ENCODE measurements at regions of chr2 and their contacts with region 1.

Region 1: GRCh38 chr2:238370823-238371372 is 50.6 kb downstream of the TRAF3IP1 start:
- DNase-seq: peak; percentile 71
- ATAC-seq: peak; percentile 99
- H3K4me3 ChIP-seq: no peak overlapping the region
- H3K27ac ChIP-seq: no peak overlapping the region
- H3K4me1 ChIP-seq: no peaks in the 10 kb centered on the region
- H3K27me3 ChIP-seq: no peaks in the 10 kb centered on the region
- CTCF ChIP-seq: peak; percentile 93

Region 2: DNA sequence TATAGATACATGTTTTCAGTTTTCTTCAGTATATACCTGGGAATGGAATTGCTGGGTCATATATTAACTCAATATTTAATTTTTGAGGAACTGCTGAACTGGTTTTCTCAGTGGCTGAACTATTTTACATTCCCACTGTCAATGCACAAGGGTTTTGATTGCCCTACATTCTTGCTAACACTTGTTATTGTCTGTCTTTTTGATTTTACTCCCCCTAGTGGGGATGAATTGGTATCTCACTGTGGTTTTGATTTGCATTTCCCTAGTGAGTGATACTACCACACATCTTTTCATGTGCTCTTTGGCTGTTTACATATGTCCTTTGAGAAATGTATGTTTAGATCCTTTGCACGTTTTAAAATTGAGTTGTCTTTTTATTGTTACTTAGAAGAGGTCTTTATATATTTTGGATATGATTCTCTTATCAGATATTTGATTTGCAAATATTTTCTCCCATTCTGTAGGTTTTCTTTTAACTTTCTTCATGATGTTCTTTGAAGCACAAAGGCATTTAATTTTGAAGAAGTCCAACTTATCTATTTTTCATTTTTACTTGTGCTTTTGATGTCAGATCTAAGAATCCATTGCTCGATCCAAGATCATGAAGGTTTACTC is 92.0 kb after region 1 on chr2:
- CTCF ChIA-PET with region 1: no interaction called
- POLR2A ChIA-PET with region 1: no interaction called
- intact Hi-C with region 1: loop called (anchors 2 kb)
- DNase-seq: peak; percentile 73
- ATAC-seq: peak; percentile 72
- H3K4me3 ChIP-seq: no peak overlapping the region
- H3K27ac ChIP-seq: no peak overlapping the region
- H3K4me1 ChIP-seq: peaks cover 19% of the 10 kb centered on the region
- H3K27me3 ChIP-seq: no peaks in the 10 kb centered on the region
- CTCF ChIP-seq: peak; percentile 80

Region 3: GRCh38 chr2:239065962-239066361 is 695.1 kb after region 1 on chr2:
- CTCF ChIA-PET with region 1: no interaction called
- POLR2A ChIA-PET with region 1: no interaction called
- intact Hi-C with region 1: no loop called
- DNase-seq: no peak
- ATAC-seq: no peak
- H3K4me3 ChIP-seq: no peak overlapping the region
- H3K27ac ChIP-seq: no peak overlapping the region
- H3K4me1 ChIP-seq: peaks cover 10% of the 10 kb centered on the region
- H3K27me3 ChIP-seq: no peaks in the 10 kb centered on the region
- CTCF ChIP-seq: no peak